GM12878 (cell line): ENCODE measurements at regions of chr5 and their contacts with region 1.

Region 1: DNA sequence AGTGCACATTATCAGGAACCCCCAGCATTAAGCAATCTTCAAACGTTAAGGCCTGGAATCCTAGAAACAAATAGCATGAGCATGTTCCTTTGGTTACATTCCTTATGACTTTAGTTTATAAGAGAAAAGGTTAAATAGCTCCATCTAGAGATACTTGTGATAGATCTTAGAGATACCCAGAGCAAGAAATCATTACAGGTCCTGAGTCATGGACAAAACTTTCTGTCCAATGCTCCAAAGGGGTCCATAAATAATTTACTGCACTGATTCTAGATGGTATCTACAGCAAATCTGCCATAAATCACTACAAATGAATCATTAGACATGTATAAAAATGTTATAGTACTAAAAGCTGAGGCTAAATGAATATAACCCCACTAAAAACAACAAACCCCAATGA is 139.6 kb downstream of the HTR1A start:
- DNase-seq: no peak
- ATAC-seq: no peak
- H3K4me3 ChIP-seq: no peak overlapping the region
- H3K27ac ChIP-seq: no peak overlapping the region
- H3K4me1 ChIP-seq: no peaks in the 10 kb centered on the region
- H3K27me3 ChIP-seq: no peaks in the 10 kb centered on the region
- CTCF ChIP-seq: no peak; a peak in 1 of 6 replicates
- EP300 ChIP-seq: no peak
- POLR2A ChIP-seq: no peak
- RAD21 ChIP-seq: no peak

Region 2: DNA sequence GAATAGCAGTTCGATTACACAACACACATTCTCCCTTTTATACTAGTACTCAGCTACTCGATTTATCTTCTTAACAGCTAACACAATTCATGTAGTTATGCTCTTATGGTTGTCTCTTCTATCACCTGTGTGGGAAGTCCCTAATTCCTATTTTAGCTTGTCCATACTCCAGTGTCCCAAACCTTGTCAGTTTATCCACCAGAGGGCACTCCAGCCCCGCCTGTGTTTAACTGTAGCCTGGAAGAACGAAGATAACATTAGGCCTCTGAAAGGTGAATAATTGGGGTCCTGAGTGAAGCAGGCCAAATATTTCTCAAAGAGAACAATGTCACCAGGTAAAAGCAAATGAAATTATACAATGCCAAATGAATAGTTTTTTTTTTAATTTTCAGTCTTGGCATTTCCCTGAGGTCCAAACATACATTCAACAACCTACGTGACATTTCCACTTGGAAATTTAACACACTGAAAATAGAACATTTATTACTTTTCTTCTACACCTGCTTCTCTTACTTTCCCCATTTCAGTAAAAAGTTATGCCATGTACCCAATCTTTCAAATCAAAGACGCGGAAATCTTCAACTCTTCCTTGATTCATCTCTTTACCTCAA is 421.1 kb before region 1 on chr5:
- CTCF ChIA-PET with region 1: interaction called, 3 read pairs
- POLR2A ChIA-PET with region 1: no interaction called
- RAD21 ChIA-PET with region 1: interaction called, 4 read pairs
- SMC1A ChIA-PET with region 1: interaction called, 4 read pairs
- in situ Hi-C with region 1: no loop called
- intact Hi-C with region 1: loop called (anchors 10 kb)
- DNase-seq: peak; percentile 1
- ATAC-seq: peak; percentile 95
- H3K4me3 ChIP-seq: no peak overlapping the region
- H3K27ac ChIP-seq: no peak overlapping the region
- H3K4me1 ChIP-seq: no peaks in the 10 kb centered on the region
- H3K27me3 ChIP-seq: no peaks in the 10 kb centered on the region
- CTCF ChIP-seq: peak; percentile 64 to 76 (median 76)
- EP300 ChIP-seq: no peak
- POLR2A ChIP-seq: no peak
- RAD21 ChIP-seq: peak; percentile 87